Adrenal gland (tissue), 19 donors: ENCODE measurements at regions of chr5 and their contacts with region 1.

Region 1: GRCh38 chr5:59188419-59189225 is 605.7 kb downstream of the RAB3C start:
- DNase-seq: peak; percentile 52 to 82 (median 64)
- H3K4me3 ChIP-seq: no peak overlapping the region
- H3K27ac ChIP-seq: no peak overlapping the region
- H3K4me1 ChIP-seq: peaks cover 0 to 8% of the 10 kb centered on the region in 2 donors
- H3K27me3 ChIP-seq: no peaks in the 10 kb centered on the region
- CTCF ChIP-seq: peak; percentile 66 to 90 (median 82)
- POLR2A ChIP-seq: no peak

Region 2: DNA sequence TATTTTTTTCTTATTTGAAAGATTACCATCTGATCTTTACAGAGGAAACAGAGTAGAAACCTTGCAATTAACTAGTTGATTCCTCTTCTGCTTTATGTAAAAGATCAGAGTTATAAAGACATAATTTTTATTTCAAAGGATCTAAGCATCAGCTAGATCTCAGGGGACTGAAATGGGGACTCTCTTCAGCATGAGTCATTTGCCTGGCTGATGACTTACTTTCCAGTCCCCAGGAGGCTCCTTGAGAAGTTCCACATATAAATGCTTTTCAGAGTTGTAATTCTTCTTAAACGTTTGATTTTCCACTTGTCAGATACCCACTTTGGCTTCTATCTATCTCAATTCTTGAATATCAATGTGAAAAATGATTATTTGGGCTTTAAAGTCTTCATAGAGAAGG is 216.3 kb before region 1 on chr5:
- intact Hi-C with region 1: no loop called
- DNase-seq: no peak
- H3K4me3 ChIP-seq: no peak overlapping the region
- H3K27ac ChIP-seq: no peak overlapping the region
- H3K4me1 ChIP-seq: no peaks in the 10 kb centered on the region
- H3K27me3 ChIP-seq: no peaks in the 10 kb centered on the region
- CTCF ChIP-seq: no peak
- POLR2A ChIP-seq: no peak

Region 3: GRCh38 chr5:59367791-59368394 is 179.3 kb after region 1 on chr5:
- intact Hi-C with region 1: loop called in 1 of 2 experiments (anchors 5 kb)
- DNase-seq: peak; percentile 37 to 71 (median 54)
- H3K4me3 ChIP-seq: no peak overlapping the region
- H3K27ac ChIP-seq: no peak overlapping the region
- H3K4me1 ChIP-seq: no peaks in the 10 kb centered on the region
- H3K27me3 ChIP-seq: no peaks in the 10 kb centered on the region
- CTCF ChIP-seq: peak; percentile 37 to 73 (median 52)
- POLR2A ChIP-seq: no peak